Activated CD4-positive, alpha-beta T cell treated with anti-CD3 and anti-CD28 coated beads, Interleukin-2, amount 10 ng/mL, durations not matched to agents 24 days and 14 days (primary cell): ENCODE measurements at regions of chr2 and their contacts with region 1.

Region 1: DNA sequence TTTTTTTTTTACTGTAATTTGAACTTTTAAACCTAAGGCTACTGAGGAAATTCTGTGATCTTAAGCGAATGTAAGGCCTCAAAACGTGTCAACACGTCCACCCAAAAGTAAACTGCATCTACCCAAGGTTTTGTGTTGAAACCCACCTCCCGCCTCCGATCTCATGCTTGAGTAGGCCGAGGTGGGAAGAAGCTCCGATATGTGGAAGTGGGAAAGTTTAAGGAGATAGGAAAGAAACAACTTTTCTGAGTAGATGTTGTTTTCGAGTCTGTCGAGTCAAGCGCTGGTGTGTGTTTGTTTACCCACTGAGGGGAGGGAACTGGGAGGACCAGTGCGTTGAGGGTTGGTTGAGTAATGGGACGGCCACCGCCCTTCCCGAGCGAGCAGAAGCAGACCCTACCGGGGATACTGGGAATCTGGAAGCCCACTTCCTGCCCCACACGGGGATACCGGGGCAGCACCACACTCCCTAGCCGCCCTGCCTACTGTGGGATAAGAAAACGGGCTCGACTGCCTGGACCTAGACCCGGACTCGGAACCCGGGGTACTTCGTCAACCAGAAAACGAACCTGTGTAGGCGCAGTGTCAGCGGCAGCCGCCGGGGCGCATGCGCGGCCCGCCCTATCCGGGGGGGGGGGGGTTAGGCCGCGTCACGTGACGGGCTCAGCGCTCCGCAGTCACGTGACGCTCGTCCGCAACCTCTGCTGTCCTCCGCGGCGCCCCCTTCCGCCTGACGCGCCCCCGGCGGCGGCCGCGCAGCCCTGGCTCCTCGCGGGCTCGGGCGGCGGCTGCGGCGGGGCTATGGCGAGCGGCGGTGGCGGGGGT is at the start of gene RETREG2:
- DNase-seq: peak; percentile 93
- H3K4me3 Mint-ChIP-seq: peak within 1 kb of the TSS; percentile 94
- H3K27ac Mint-ChIP-seq: peak within 1 kb of the TSS; percentile 99
- H3K4me1 Mint-ChIP-seq: peaks cover 62% of the 10 kb centered on the region
- H3K27me3 Mint-ChIP-seq: no peaks in the 10 kb centered on the region
- total RNA-seq, gene RETREG2: 54.1 and 57.4 TPM in 2 replicates

Region 2: GRCh38 chr2:218710687-218711549 is 466.8 kb before region 1 on chr2 and contains the start of gene TTLL4:
- intact Hi-C with region 1: loop called (anchors 2 kb)
- DNase-seq: peak; percentile 100
- H3K4me3 Mint-ChIP-seq: peak within 1 kb of the TSS; percentile 94
- H3K27ac Mint-ChIP-seq: peak within 1 kb of the TSS; percentile 85
- H3K4me1 Mint-ChIP-seq: peaks cover 18% of the 10 kb centered on the region
- H3K27me3 Mint-ChIP-seq: peaks cover 3% of the 10 kb centered on the region
- total RNA-seq, gene TTLL4: 66.1 and 71.2 TPM in 2 replicates

Region 3: GRCh38 chr2:219010162-219010756 is 167.5 kb before region 1 on chr2:
- intact Hi-C with region 1: no loop called
- DNase-seq: peak; percentile 67
- H3K4me3 Mint-ChIP-seq: no peak overlapping the region
- H3K27ac Mint-ChIP-seq: no peak overlapping the region
- H3K4me1 Mint-ChIP-seq: no peaks in the 10 kb centered on the region
- H3K27me3 Mint-ChIP-seq: peaks cover 14% of the 10 kb centered on the region

Region 4: DNA sequence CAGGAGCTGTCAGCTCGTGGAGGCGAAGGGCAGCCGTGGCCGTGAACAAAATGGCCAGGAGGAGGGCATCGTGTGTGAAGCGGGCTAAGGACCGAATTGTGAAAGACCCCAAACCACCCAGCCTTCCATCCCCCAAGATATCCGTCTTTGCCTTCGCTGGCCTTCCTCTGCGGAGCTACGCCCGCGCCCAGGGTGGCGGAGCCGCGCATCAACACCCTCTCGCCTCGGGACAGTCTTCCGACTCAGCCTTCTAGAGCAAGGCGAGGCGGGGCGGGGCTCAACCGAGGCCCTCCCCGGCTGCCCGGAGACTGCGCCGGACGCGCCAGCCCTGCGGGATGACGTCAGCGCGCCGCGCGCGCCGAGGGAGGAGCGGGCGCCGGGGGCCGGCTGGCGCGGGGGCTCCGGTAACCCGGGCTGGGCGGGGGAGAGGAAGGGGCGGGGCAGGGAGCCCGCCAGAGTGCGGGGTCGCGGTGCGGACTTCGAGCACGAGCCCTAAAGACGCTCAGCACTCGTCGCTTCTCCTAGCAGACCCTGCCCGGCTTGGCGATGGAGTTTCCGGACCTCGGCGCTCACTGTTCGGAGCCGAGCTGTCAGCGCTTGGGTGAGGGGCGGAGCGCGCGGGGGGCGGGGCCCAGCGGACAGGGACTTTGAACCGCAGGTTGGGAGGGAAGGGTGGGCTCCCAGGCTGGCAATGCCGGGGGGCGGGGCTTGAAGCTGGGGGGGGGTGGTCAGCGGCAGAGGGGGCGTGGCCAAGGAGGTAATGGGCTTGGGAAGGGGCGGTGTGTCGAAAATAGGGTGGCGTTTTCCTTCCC is 28.9 kb after region 1 on chr2 and contains the start of gene ZFAND2B:
- intact Hi-C with region 1: loop called (anchors 1 kb)
- DNase-seq: peak; percentile 99
- H3K4me3 Mint-ChIP-seq: peak within 1 kb of the TSS; percentile 83
- H3K27ac Mint-ChIP-seq: peak within 1 kb of the TSS; percentile 92
- H3K4me1 Mint-ChIP-seq: peaks cover 35% of the 10 kb centered on the region
- H3K27me3 Mint-ChIP-seq: no peaks in the 10 kb centered on the region
- total RNA-seq, gene ZFAND2B: 36.7 and 37.4 TPM in 2 replicates

Region 5: GRCh38 chr2:219229305-219230058 is 51.7 kb after region 1 on chr2 and contains the starts of genes ANKZF1 and ATG9A:
- intact Hi-C with region 1: loop called (anchors 1 kb)
- DNase-seq: peak; percentile 100
- H3K4me3 Mint-ChIP-seq: peak within 1 kb of the TSS; percentile 92
- H3K27ac Mint-ChIP-seq: peak within 1 kb of the TSS; percentile 98
- H3K4me1 Mint-ChIP-seq: peaks cover 43% of the 10 kb centered on the region
- H3K27me3 Mint-ChIP-seq: no peaks in the 10 kb centered on the region
- total RNA-seq, gene ANKZF1: 144 and 149 TPM in 2 replicates
- total RNA-seq, gene ATG9A: 61.6 and 67.2 TPM in 2 replicates

Region 6: DNA sequence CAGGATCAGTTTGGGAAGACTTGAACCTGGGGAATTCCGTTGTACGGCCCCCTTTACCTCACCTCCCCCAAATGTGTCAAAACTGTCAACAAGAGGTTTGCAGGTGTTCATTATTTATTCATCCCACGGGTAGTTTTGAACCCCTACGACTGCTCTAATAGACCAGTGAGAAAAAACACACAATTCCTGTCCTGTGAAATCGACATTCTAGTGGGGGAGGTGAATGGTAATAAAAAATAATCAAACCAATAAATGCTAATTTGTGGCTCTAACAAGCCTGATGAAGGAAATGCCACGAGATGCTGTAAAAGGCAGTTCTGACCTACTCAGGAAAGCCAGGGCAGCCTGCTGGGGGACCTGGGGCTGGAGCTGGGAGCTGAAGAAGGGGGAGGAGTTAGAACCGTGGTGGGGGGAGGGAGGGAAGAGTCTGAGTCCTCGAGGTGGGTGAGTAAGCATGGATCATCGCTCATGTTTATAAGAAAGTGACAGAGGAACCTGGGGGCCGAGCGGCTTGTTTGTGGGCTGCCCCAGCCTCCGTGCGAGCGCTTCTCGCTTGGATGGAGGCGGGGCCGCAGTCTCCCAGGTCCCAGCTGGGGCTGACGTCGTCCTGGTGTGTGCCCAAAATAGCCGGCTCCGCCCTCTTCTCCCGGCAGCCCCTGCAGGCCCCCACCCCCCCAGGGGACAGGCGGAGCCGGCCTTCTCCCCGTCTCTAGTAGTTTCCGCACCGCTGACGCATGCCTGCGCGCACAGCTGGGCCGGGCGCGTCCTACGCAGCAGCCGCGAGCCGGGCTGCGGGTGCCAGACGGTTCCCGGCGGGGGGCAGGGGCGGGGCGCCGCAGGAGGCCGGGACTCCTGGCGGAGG is 101.1 kb after region 1 on chr2 and contains the start of gene DNAJB2:
- intact Hi-C with region 1: loop called (anchors 1 kb)
- DNase-seq: peak; percentile 100
- H3K4me3 Mint-ChIP-seq: peak within 1 kb of the TSS; percentile 97
- H3K27ac Mint-ChIP-seq: peak within 1 kb of the TSS; percentile 96
- H3K4me1 Mint-ChIP-seq: peaks cover 42% of the 10 kb centered on the region
- H3K27me3 Mint-ChIP-seq: no peaks in the 10 kb centered on the region
- total RNA-seq, gene DNAJB2: 49.7 and 52.4 TPM in 2 replicates

Region 7: DNA sequence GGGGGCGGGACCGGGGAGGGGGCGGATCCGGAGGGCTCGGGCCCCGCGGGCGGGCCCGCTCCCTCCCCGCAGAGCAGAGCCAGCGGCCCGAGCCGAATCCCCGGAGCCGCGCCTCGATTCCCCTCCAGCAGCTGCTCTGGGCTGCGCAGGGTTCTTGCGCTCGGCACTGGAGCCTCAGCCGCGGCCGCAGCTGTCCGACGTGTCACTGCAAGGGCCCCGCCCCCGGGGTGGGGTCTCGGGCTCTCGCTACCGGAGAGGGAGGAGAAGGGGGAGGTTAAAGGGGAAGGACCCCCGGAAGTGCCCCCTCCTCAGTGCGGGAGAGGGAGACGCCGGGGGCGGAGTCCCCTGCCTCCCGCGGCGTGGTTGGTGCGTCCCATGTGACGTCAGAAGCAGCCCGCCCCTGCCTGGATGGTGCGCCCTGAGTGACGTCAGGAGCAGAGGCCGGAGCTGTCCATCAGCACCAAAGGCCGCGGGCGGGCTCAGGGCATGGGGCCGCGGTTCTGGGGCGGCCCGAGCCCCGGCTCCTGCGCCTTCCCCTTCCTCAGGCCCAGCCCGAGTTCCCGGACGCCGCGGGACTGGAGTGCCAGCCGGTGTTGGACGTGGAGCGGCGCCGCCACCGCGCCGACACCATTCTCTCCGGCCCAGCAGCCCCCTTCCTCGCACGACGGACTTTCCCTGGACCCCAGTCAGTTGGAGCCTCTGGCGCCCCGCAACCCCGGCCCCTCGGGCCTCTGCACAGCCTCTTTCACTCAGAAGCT is 366.0 kb after region 1 on chr2 and contains the starts of genes CHPF and TMEM198:
- intact Hi-C with region 1: loop called (anchors 1 kb)
- DNase-seq: peak; percentile 99
- H3K4me3 Mint-ChIP-seq: peak within 1 kb of the TSS; percentile 89
- H3K27ac Mint-ChIP-seq: peak within 1 kb of the TSS; percentile 75
- H3K4me1 Mint-ChIP-seq: peaks cover 17% of the 10 kb centered on the region
- H3K27me3 Mint-ChIP-seq: peaks cover 18% of the 10 kb centered on the region
- total RNA-seq, gene CHPF: 37.8 and 38.3 TPM in 2 replicates
- total RNA-seq, gene TMEM198: 3.1 and 3.4 TPM in 2 replicates